ENCODE measurements at regions of chr2 and their contacts with region 1.

Region 1: GRCh38 chr2:203782262-203782976 is 76.0 kb downstream of the CD28 start:
- DNase-seq: peak; percentile 86
- H3K4me3 Mint-ChIP-seq: no peak overlapping the region
- H3K27ac Mint-ChIP-seq: peak overlapping the region; percentile 64
- H3K4me1 Mint-ChIP-seq: peaks cover 50% of the 10 kb centered on the region
- H3K27me3 Mint-ChIP-seq: no peaks in the 10 kb centered on the region

Region 2: GRCh38 chr2:203484266-203485112 is 297.9 kb before region 1 on chr2:
- CTCF ChIA-PET with region 1: interaction called, 4 read pairs
- intact Hi-C with region 1: loop called (anchors 1 kb)
- DNase-seq: peak; percentile 68
- H3K4me3 Mint-ChIP-seq: no peak overlapping the region
- H3K27ac Mint-ChIP-seq: no peak overlapping the region
- H3K4me1 Mint-ChIP-seq: peaks cover 9% of the 10 kb centered on the region
- H3K27me3 Mint-ChIP-seq: no peaks in the 10 kb centered on the region

Region 3: GRCh38 chr2:203650860-203651613 is 131.4 kb before region 1 on chr2:
- CTCF ChIA-PET with region 1: no interaction called
- intact Hi-C with region 1: loop called (anchors 1 kb)
- DNase-seq: peak; percentile 26
- H3K4me3 Mint-ChIP-seq: no peak overlapping the region
- H3K27ac Mint-ChIP-seq: no peak overlapping the region
- H3K4me1 Mint-ChIP-seq: peaks cover 25% of the 10 kb centered on the region
- H3K27me3 Mint-ChIP-seq: no peaks in the 10 kb centered on the region

Region 4: GRCh38 chr2:203740780-203741281 is 41.6 kb before region 1 on chr2:
- CTCF ChIA-PET with region 1: interaction called, 8 read pairs
- intact Hi-C with region 1: loop called (anchors 1 kb)
- DNase-seq: peak; percentile 69
- H3K4me3 Mint-ChIP-seq: peak overlapping the region; percentile 54
- H3K27ac Mint-ChIP-seq: peak overlapping the region; percentile 97
- H3K4me1 Mint-ChIP-seq: peaks cover 88% of the 10 kb centered on the region
- H3K27me3 Mint-ChIP-seq: no peaks in the 10 kb centered on the region

Region 5: GRCh38 chr2:203759690-203760365 is 22.6 kb before region 1 on chr2:
- CTCF ChIA-PET with region 1: interaction called, 6 read pairs
- intact Hi-C with region 1: loop called (anchors 1 kb)
- DNase-seq: no peak
- H3K4me3 Mint-ChIP-seq: no peak overlapping the region
- H3K27ac Mint-ChIP-seq: no peak overlapping the region
- H3K4me1 Mint-ChIP-seq: peaks cover 59% of the 10 kb centered on the region
- H3K27me3 Mint-ChIP-seq: no peaks in the 10 kb centered on the region